Activated T-helper 2 cell treated with anti-CD3 and anti-CD28 coated beads, Interferon-gamma antibody, Interleukin-2, Interleukin-4, amounts not matched to agents 10 μg/mL and 5 μg/mL and 100 μg/mL, durations not matched to agents 14 hours and 24 hours and 36 hours (primary cell): ENCODE measurements at regions of chr7 and their contacts with region 1.

Region 1: GRCh38 chr7:47291461-47292081 is 290.3 kb downstream of the TNS3 start:
- DNase-seq: no peak
- H3K4me3 Mint-ChIP-seq: no peak overlapping the region
- H3K27ac Mint-ChIP-seq: peak overlapping the region; percentile 90
- H3K4me1 Mint-ChIP-seq: peaks cover 29% of the 10 kb centered on the region
- H3K27me3 Mint-ChIP-seq: no peaks in the 10 kb centered on the region

Region 2: GRCh38 chr7:47266131-47266706 is 25.4 kb before region 1 on chr7:
- intact Hi-C with region 1: loop called (anchors 2 kb)
- DNase-seq: peak; percentile 20
- H3K4me3 Mint-ChIP-seq: no peak overlapping the region
- H3K27ac Mint-ChIP-seq: no peak overlapping the region
- H3K4me1 Mint-ChIP-seq: no peaks in the 10 kb centered on the region
- H3K27me3 Mint-ChIP-seq: peaks cover 2% of the 10 kb centered on the region

Region 3: DNA sequence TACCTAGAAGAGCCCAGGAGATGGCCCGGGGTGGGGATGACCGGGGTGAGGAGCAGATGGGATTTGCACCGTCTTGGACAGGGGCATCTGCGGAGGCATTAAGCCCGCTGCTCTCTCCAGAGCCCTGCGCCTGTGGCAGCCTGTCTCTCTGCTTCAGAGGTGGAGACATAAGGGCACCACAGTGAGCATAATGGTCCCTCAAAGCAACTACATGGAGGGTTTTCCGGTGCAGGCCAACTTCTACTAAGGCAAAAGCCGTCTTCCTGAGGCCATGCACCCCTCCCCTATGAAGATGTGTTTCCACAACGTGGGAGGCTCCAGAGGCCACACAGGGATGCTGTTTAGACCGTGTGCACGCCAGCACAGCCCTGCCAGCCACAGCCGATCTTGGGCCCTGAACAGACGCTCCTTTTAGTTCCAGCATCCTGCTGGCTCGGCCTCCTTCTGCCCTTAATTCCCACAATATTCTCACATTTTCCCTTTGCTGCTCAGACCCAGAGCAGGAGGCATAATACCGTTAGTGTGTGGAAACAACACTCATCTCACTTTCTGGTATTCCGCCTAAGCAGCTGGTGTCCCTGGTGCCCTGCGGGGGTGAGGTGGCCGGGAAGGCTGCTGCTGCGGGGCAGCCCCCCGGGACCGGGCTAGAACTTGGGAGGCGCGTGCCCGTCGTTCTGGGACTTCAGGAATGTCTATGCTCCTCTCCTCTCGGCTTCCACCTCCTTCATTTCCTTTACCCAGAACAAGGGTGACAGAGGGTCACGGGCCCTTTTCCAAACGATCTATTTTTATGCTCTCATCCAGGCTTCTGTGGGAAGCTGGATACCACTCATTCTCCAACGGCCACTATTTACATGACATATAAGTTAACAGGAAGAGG is 23.4 kb after region 1 on chr7:
- intact Hi-C with region 1: loop called (anchors 1 kb)
- DNase-seq: no peak
- H3K4me3 Mint-ChIP-seq: no peak overlapping the region
- H3K27ac Mint-ChIP-seq: peak overlapping the region; percentile 66
- H3K4me1 Mint-ChIP-seq: peaks cover 34% of the 10 kb centered on the region
- H3K27me3 Mint-ChIP-seq: no peaks in the 10 kb centered on the region

Region 4: GRCh38 chr7:47327698-47328391 is 36.3 kb after region 1 on chr7:
- intact Hi-C with region 1: loop called (anchors 5 kb)
- DNase-seq: no peak
- H3K4me3 Mint-ChIP-seq: no peak overlapping the region
- H3K27ac Mint-ChIP-seq: no peak overlapping the region
- H3K4me1 Mint-ChIP-seq: peaks cover 2% of the 10 kb centered on the region
- H3K27me3 Mint-ChIP-seq: no peaks in the 10 kb centered on the region

Region 5: DNA sequence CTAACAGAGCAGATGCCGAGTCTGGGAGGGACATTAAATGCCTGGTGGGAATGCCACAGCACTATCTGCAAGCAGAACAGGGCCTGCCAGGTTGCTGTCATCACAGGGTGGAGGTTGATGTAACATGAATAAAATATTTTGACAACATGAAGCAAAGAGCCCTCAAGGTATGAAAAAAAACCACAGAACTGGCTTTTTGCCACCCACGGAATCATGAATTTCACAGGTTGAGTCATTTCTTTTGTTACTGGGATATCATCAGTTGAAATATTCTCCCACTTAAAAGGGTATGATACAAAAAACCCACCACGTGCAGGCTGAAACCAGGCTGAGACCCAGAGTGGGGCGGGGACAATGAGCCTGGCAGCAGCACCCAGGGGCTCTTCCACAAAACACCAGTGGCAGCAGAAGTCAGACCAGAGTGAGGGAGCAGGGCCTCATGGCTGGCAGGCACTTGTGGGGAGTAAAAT is 70.2 kb after region 1 on chr7:
- intact Hi-C with region 1: loop called (anchors 1 kb)
- DNase-seq: peak; percentile 15
- H3K4me3 Mint-ChIP-seq: no peak overlapping the region
- H3K27ac Mint-ChIP-seq: peak overlapping the region; percentile 44
- H3K4me1 Mint-ChIP-seq: peaks cover 5% of the 10 kb centered on the region
- H3K27me3 Mint-ChIP-seq: no peaks in the 10 kb centered on the region

Region 6: GRCh38 chr7:47428092-47428767 is 136.7 kb after region 1 on chr7:
- intact Hi-C with region 1: no loop called
- DNase-seq: no peak
- H3K4me3 Mint-ChIP-seq: no peak overlapping the region
- H3K27ac Mint-ChIP-seq: no peak overlapping the region
- H3K4me1 Mint-ChIP-seq: no peaks in the 10 kb centered on the region
- H3K27me3 Mint-ChIP-seq: no peaks in the 10 kb centered on the region

Region 7: GRCh38 chr7:47474937-47475878 is 183.6 kb after region 1 on chr7:
- intact Hi-C with region 1: loop called (anchors 2 kb)
- DNase-seq: peak; percentile 9
- H3K4me3 Mint-ChIP-seq: no peak overlapping the region
- H3K27ac Mint-ChIP-seq: no peak overlapping the region
- H3K4me1 Mint-ChIP-seq: peaks cover 2% of the 10 kb centered on the region
- H3K27me3 Mint-ChIP-seq: no peaks in the 10 kb centered on the region

Region 8: GRCh38 chr7:47482013-47482875 is 190.7 kb after region 1 on chr7:
- intact Hi-C with region 1: loop called (anchors 1 kb)
- DNase-seq: no peak
- H3K4me3 Mint-ChIP-seq: peak overlapping the region; percentile 20
- H3K27ac Mint-ChIP-seq: peak overlapping the region; percentile 81
- H3K4me1 Mint-ChIP-seq: peaks cover 32% of the 10 kb centered on the region
- H3K27me3 Mint-ChIP-seq: no peaks in the 10 kb centered on the region